Breast epithelium (tissue), 4 donors: ENCODE measurements at regions of chr1 and their contacts with region 1.

Region 1: DNA sequence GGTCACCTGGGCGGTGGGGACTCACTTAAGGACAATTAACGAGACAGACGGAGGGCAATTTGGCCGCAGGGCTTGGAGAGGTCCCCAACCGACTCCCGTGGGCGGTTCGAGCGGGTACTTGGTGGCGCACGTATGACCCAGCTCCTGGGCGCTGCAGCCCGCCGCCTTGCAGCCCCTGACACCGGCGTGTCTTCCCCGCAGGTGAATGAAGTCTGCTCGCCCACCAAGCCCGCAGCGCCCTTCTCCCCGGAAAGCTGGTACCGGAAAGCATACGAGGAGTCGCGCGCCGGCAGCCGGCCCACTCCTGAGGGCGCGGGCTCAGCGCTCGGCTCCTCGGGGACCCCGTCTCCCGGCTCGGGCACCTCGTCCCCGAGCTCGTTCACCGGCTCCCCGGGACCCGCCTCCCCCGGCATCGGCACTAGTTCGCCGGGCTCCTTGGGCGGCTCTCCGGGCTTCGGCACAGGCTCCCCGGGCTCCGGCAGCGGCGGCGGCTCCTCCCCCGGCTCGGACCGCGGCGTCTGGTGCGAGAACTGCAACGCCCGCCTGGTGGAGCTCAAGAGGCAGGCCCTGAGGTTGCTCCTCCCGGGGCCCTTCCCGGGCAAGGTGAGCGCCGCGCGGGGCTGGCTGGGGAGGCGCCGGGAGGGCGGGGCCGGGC is 1.4 kb downstream of the KIF26B start:
- DNase-seq: peak; percentile 70 to 87
- H3K4me3 ChIP-seq: peak overlapping the region; percentile 48 to 68 (median 54)
- H3K27ac ChIP-seq: no peak overlapping the region
- H3K4me1 ChIP-seq: peaks cover 0 to 10% of the 10 kb centered on the region in 2 donors
- H3K27me3 ChIP-seq: no peaks in the 10 kb centered on the region
- CTCF ChIP-seq: peak in 2 of 3 donors; percentile 53 to 60
- POLR2A ChIP-seq: no peak

Region 2: DNA sequence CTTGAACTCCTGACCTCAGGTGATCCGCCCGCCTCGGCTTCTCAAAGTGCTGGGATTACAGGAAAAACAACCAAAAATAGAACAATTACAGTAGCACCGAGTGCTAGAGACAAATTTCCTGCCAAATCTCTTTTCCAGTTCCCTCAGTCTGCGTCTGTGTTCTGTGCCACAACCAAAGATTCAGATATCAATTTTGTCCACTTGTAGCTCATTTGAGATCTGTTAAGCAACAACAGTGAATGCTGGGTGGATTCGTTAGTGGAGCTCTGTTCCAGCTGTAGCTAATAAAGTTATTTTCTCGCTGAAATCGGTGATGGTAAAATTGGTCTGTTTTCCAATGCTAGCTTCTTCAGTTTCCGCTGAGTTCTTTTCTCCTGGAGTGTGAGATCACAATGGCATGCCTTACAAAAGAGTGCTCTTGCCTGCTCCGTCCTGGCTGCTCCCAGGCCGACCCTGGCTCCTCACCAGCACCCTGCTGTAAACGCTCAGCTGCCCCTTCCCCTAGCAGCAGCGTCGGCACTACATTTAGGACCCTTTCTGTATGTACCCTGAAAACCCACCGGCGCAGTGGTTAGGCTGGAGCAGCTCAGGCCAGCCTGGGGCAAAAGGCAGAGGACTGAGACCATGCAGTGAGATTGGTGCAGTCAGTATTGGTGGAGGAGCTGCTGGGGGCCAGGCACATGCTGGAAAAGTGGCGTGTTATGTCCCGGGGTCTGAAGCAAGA is 393.9 kb after region 1 on chr1:
- intact Hi-C with region 1: no loop called
- DNase-seq: no peak
- H3K4me3 ChIP-seq: no peak overlapping the region
- H3K27ac ChIP-seq: peak overlapping the region in 1 of 2 donors; percentile 61
- H3K4me1 ChIP-seq: no peaks in the 10 kb centered on the region
- H3K27me3 ChIP-seq: no peaks in the 10 kb centered on the region
- CTCF ChIP-seq: no peak
- POLR2A ChIP-seq: no peak

Region 3: DNA sequence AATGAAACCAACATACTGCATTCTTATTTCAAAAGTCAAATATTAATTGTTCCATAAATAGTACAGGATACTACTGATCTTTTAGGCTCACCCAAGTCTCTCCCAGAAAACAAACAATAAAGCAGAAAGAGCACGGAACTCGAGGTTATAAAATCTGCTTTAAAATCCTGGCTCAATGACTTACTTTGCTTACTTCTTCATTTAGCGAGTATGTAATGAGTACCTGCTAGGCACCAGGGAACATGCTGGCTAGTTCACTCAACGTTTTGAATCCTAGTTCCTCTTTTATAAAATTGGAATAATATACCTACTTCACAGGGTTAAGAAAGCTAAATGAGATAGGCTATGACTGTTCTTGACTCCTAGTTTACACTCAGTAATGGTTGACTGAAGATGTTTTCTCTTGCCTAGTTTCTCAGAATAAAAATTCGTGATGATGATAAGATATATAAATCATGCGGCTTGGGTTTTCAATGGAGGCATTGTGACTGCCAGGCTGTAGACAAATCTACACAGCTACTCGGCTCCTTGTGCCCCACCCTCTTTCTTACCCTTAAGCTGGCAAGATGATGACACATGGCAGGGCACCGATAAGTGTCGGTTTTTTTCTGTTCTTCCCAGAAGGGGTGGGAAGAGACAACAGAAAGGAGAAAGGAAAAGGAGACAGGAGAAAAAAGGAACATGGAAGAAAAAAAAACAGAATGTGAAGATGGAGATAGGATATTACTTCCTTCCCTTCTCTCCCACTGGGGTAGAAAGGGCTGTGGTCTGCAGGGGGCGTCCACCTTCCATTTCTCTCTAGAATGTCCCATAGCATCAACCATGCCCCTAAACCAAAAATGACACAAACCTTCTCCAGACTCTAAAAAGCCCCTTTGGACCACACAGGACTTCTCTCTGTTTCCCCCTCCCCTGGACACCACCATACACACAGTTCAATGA is 843.8 kb after region 1 on chr1:
- intact Hi-C with region 1: loop called (anchors 2 kb)
- DNase-seq: no peak
- H3K4me3 ChIP-seq: no peak overlapping the region
- H3K27ac ChIP-seq: no peak overlapping the region
- H3K4me1 ChIP-seq: no peaks in the 10 kb centered on the region
- H3K27me3 ChIP-seq: no peaks in the 10 kb centered on the region
- CTCF ChIP-seq: no peak
- POLR2A ChIP-seq: no peak